CD4-positive, alpha-beta T cell (primary cell): ENCODE measurements at regions of chr18 and their contacts with region 1.

Region 1: DNA sequence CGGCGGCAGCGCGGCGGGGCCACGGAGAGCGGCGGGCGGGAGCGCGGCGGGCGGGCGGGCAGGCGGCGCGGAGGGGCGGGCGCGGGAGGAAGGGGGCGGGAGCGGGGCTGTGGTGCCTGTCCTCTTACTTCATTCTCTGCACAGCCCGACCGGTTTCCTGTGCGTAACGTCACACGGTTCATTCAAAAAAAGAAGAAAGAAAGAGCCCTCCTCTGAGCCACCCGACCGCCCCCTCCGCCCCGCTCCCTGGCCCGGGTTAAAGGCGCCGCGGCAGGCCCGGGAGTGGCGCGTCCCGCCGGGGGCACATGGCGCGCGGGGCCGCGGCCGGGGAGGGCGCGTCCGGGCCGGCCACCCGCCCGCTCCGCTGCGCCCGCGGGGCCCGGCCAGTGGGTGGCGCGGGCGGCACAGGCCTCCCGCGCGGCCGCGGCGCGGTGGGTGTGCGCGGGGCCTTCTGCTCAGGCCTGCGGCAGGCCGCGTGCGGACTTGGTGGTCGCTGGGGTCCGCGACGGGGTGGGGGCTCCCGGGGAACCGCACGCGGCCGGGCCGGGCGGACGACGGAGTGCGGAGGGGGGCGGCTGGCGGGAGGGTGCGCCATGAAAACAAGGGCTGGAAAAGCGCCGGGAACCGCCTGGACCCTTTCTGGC is 599 bp upstream of the BCL2 start:
- DNase-seq: peak; percentile 76 to 96 (median 84)
- ATAC-seq: peak; percentile 80
- H3K4me3 ChIP-seq: peak overlapping the region; percentile 94
- H3K4me3 Mint-ChIP-seq: peak overlapping the region; percentile 92
- H3K27ac ChIP-seq: peak overlapping the region in 1 of 2 donors; percentile 46
- H3K27ac Mint-ChIP-seq: peak overlapping the region; percentile 95
- H3K4me1 ChIP-seq: peaks cover 17% of the 10 kb centered on the region
- H3K4me1 Mint-ChIP-seq: peaks cover 56% of the 10 kb centered on the region
- H3K27me3 ChIP-seq: no peaks in the 10 kb centered on the region
- H3K27me3 Mint-ChIP-seq: no peaks in the 10 kb centered on the region
- CTCF ChIP-seq: no peak

Region 2: DNA sequence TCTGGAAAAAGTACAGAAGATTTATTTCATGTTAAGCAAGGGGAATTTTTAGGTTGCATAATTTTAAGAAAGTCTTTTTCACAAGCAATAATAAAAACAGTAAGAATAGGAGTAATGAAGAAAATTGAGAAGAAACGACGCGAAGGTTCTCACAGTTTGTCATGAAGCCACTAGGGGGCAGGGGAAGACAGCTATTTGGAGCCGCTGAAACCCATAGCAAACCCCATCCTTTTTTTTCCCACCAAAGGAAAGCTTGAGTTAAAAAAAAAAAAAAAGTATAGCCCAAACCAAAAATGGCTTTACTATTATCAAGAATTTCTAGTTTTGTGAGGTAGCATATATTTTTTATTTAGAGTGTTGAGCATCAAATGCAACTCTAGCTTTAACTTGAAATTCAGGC is 303.9 kb before region 1 on chr18:
- CTCF ChIA-PET with region 1: interaction called, 36 read pairs
- POLR2A ChIA-PET with region 1: interaction called, 6 read pairs
- intact Hi-C with region 1: loop called (anchors 1 kb)
- DNase-seq: peak in 13 of 14 experiments; percentile 10 to 81 (median 33)
- ATAC-seq: peak; percentile 71
- H3K4me3 ChIP-seq: no peak overlapping the region
- H3K4me3 Mint-ChIP-seq: no peak overlapping the region
- H3K27ac ChIP-seq: no peak overlapping the region
- H3K27ac Mint-ChIP-seq: no peak overlapping the region
- H3K4me1 ChIP-seq: no peaks in the 10 kb centered on the region
- H3K4me1 Mint-ChIP-seq: no peaks in the 10 kb centered on the region
- H3K27me3 ChIP-seq: no peaks in the 10 kb centered on the region
- H3K27me3 Mint-ChIP-seq: peaks cover 9% of the 10 kb centered on the region
- CTCF ChIP-seq: peak; percentile 81

Region 3: GRCh38 chr18:63155169-63155852 is 164.9 kb before region 1 on chr18:
- CTCF ChIA-PET with region 1: interaction called, 56 read pairs
- POLR2A ChIA-PET with region 1: interaction called, 34 read pairs
- intact Hi-C with region 1: loop called (anchors 1 to 2 kb)
- DNase-seq: peak; percentile 63 to 90 (median 76)
- ATAC-seq: peak; percentile 75
- H3K4me3 ChIP-seq: peak overlapping the region; percentile 51
- H3K4me3 Mint-ChIP-seq: peak overlapping the region; percentile 85
- H3K27ac ChIP-seq: peak overlapping the region; percentile 95 to 96
- H3K27ac Mint-ChIP-seq: peak overlapping the region; percentile 91
- H3K4me1 ChIP-seq: peaks cover 97% of the 10 kb centered on the region
- H3K4me1 Mint-ChIP-seq: peaks cover 100% of the 10 kb centered on the region
- H3K27me3 ChIP-seq: no peaks in the 10 kb centered on the region
- H3K27me3 Mint-ChIP-seq: no peaks in the 10 kb centered on the region
- CTCF ChIP-seq: peak; percentile 94

Region 4: GRCh38 chr18:63224630-63225029 is 95.5 kb before region 1 on chr18:
- CTCF ChIA-PET with region 1: interaction called, 6 read pairs
- POLR2A ChIA-PET with region 1: interaction called, 16 read pairs
- intact Hi-C with region 1: no loop called
- DNase-seq: peak in 5 of 14 experiments; percentile 12 to 59 (median 38)
- ATAC-seq: peak; percentile 61
- H3K4me3 ChIP-seq: no peak overlapping the region
- H3K4me3 Mint-ChIP-seq: no peak overlapping the region
- H3K27ac ChIP-seq: peak overlapping the region; percentile 13 to 43
- H3K27ac Mint-ChIP-seq: peak overlapping the region; percentile 66
- H3K4me1 ChIP-seq: peaks cover 32% of the 10 kb centered on the region
- H3K4me1 Mint-ChIP-seq: peaks cover 78% of the 10 kb centered on the region
- H3K27me3 ChIP-seq: no peaks in the 10 kb centered on the region
- H3K27me3 Mint-ChIP-seq: no peaks in the 10 kb centered on the region
- CTCF ChIP-seq: no peak

Region 5: GRCh38 chr18:63286926-63287325 is 33.2 kb before region 1 on chr18:
- CTCF ChIA-PET with region 1: interaction called, 13 read pairs
- POLR2A ChIA-PET with region 1: interaction called, 21 read pairs
- intact Hi-C with region 1: no loop called
- DNase-seq: no peak
- ATAC-seq: no peak
- H3K4me3 ChIP-seq: no peak overlapping the region
- H3K4me3 Mint-ChIP-seq: no peak overlapping the region
- H3K27ac ChIP-seq: no peak overlapping the region
- H3K27ac Mint-ChIP-seq: no peak overlapping the region
- H3K4me1 ChIP-seq: peaks cover 72% of the 10 kb centered on the region
- H3K4me1 Mint-ChIP-seq: peaks cover 14% of the 10 kb centered on the region
- H3K27me3 ChIP-seq: no peaks in the 10 kb centered on the region
- H3K27me3 Mint-ChIP-seq: no peaks in the 10 kb centered on the region
- CTCF ChIP-seq: no peak

Region 6: DNA sequence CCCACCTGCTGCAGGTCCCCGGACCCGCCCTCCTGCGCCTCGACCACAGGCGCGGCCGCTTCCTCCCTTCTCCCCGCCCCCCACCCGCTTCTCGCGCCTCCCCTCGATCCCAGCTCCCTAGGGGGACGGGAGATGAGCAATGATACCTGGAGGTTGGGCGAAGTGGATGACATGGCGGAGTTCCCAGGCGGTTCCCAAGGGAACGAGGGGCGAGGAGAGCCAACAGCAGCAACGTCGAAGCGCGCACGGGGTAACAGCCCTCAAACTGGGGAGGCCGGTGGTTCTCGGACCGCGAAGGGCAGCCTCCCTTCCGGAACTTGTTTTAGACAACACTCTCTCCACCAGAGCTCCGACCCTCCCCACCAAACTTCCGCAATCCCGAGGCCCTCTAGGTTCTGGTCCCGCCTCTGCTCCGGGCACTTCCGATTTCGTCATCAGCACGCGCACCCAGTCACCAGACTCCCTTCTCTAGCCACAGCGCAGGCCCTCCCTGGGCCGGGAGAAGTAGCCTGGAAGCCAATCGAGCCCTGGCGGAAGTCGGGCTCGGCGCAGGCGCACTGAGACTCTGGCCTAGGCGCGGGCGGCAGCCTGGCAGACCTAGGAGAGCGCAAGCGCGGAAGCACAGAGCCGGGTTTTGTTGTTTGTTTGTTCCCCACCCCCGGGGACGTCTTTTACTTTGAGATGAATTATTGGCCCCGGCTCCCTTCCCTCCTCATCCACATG is 102.1 kb after region 1 on chr18 and contains the start of gene VPS4B:
- CTCF ChIA-PET with region 1: no interaction called
- POLR2A ChIA-PET with region 1: interaction called, 5 read pairs
- intact Hi-C with region 1: loop called (anchors 2 to 5 kb)
- DNase-seq: peak; percentile 98 to 100 (median 99)
- ATAC-seq: peak; percentile 92
- H3K4me3 ChIP-seq: peak within 1 kb of the TSS; percentile 83
- H3K4me3 Mint-ChIP-seq: peak within 1 kb of the TSS; percentile 96
- H3K27ac ChIP-seq: peak within 1 kb of the TSS; percentile 84 to 93
- H3K27ac Mint-ChIP-seq: peak within 1 kb of the TSS; percentile 95
- H3K4me1 ChIP-seq: peaks cover 42% of the 10 kb centered on the region
- H3K4me1 Mint-ChIP-seq: peaks cover 25% of the 10 kb centered on the region
- H3K27me3 ChIP-seq: no peaks in the 10 kb centered on the region
- H3K27me3 Mint-ChIP-seq: peaks cover 8% of the 10 kb centered on the region
- CTCF ChIP-seq: no peak
- total RNA-seq, gene VPS4B: 46.0 to 50.8 TPM